ENCODE measurements at regions of chr3 and their contacts with region 1.

Region 1: DNA sequence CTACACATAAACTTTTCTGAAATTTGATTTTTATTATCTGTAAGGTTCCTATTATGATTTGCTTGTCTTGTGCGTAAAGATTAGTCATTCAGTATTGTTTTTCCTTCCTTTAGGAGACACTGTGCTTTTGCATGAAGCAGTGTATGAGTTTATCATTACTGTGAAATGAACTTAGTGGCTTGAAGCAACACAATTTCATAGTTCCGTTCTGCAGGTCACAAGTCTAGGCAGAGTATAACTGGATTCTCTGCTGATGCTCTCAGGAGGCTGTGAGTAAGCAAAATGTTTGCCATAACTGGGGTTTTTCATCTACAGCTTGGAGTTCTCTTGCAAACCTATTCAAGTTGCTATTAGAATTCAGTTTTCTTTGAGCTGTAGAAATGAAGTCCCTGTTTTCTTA is 1136.1 kb downstream of the OTOL1 start:
- DNase-seq: no peak
- H3K4me3 ChIP-seq: no peak overlapping the region
- H3K27ac ChIP-seq: no peak overlapping the region
- H3K4me1 ChIP-seq: no peaks in the 10 kb centered on the region
- H3K27me3 ChIP-seq: no peaks in the 10 kb centered on the region
- CTCF ChIP-seq: no peak

Region 2: GRCh38 chr3:162586591-162586990 is 46.1 kb before region 1 on chr3:
- CTCF ChIA-PET with region 1: interaction called, 11 read pairs
- POLR2A ChIA-PET with region 1: no interaction called
- intact Hi-C with region 1: no loop called
- DNase-seq: no peak
- H3K4me3 ChIP-seq: no peak overlapping the region
- H3K27ac ChIP-seq: no peak overlapping the region
- H3K4me1 ChIP-seq: no peaks in the 10 kb centered on the region
- H3K27me3 ChIP-seq: no peaks in the 10 kb centered on the region
- CTCF ChIP-seq: no peak

Measured in A673 (cell line).